WTC11 (cell line): ENCODE measurements at regions of chr11 and their contacts with region 1.

Region 1: DNA sequence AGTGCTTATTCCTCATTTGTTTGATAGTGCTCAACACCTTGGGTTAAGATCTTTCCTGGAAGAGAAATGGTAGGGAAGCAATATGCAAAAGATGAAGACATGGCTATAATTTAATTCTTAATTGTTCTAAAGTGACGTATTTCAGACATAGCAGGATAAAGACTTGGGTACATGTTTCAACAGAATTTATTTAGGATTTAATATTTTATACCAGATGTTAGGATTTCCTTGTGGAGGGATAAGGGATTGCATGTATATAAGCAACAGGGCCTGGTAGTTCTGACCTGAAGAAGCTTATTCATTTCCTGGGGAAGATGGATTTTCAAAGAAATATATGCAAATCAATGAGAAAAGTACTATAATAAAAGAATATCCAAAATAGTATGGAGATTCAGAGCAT is 163.8 kb downstream of the FAT3 start:
- DNase-seq: no peak
- ATAC-seq: no peak
- H3K4me3 Mint-ChIP-seq: no peak overlapping the region
- H3K27ac Mint-ChIP-seq: no peak overlapping the region
- H3K4me1 Mint-ChIP-seq: peaks cover 43% of the 10 kb centered on the region
- H3K27me3 Mint-ChIP-seq: no peaks in the 10 kb centered on the region
- CTCF ChIP-seq: peak; percentile 37

Region 2: GRCh38 chr11:92399705-92400104 is 11.3 kb after region 1 on chr11:
- CTCF ChIA-PET with region 1: interaction called, 15 read pairs
- POLR2A ChIA-PET with region 1: interaction called, 3 read pairs
- DNase-seq: no peak
- ATAC-seq: peak; percentile 55
- H3K4me3 Mint-ChIP-seq: no peak overlapping the region
- H3K27ac Mint-ChIP-seq: no peak overlapping the region
- H3K4me1 Mint-ChIP-seq: peaks cover 37% of the 10 kb centered on the region
- H3K27me3 Mint-ChIP-seq: no peaks in the 10 kb centered on the region
- CTCF ChIP-seq: no peak